ENCODE measurements at regions of chr14 and their contacts with region 1.

Region 1: DNA sequence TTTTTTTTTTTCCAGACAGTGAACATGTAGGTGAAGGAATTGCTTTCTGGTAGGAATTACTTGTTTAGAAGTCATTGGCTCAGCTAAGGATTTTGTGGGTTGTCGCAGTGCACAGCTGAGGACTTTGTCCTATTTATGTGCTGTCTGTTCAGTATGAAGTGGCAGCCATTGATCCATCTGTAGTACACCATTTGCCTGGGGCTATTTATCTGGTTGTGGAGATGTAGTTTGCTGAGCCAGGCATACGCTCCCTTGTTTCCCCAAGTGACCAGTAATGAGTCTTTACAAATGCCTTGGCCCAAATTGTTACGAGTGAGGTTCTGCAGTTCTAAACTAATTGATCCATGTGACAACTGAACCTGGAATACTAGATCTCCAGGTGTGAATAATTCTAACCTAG is 140.1 kb downstream of the NRXN3 start:
- DNase-seq: no peak
- H3K4me3 Mint-ChIP-seq: no peak overlapping the region
- H3K27ac Mint-ChIP-seq: no peak overlapping the region
- H3K4me1 Mint-ChIP-seq: no peaks in the 10 kb centered on the region
- H3K27me3 Mint-ChIP-seq: peaks cover 37% of the 10 kb centered on the region
- CTCF ChIP-seq: no peak

Region 2: GRCh38 chr14:78071016-78071549 is 239.2 kb before region 1 on chr14:
- CTCF ChIA-PET with region 1: interaction called, 11 read pairs
- intact Hi-C with region 1: no loop called
- DNase-seq: no peak
- H3K4me3 Mint-ChIP-seq: no peak overlapping the region
- H3K27ac Mint-ChIP-seq: no peak overlapping the region
- H3K4me1 Mint-ChIP-seq: no peaks in the 10 kb centered on the region
- H3K27me3 Mint-ChIP-seq: peaks cover 10% of the 10 kb centered on the region
- CTCF ChIP-seq: no peak

Measured in Calu3 (cell line).